KBM-7 (cell line): ENCODE measurements at regions of chr22 and their contacts with region 1.

Region 1: DNA sequence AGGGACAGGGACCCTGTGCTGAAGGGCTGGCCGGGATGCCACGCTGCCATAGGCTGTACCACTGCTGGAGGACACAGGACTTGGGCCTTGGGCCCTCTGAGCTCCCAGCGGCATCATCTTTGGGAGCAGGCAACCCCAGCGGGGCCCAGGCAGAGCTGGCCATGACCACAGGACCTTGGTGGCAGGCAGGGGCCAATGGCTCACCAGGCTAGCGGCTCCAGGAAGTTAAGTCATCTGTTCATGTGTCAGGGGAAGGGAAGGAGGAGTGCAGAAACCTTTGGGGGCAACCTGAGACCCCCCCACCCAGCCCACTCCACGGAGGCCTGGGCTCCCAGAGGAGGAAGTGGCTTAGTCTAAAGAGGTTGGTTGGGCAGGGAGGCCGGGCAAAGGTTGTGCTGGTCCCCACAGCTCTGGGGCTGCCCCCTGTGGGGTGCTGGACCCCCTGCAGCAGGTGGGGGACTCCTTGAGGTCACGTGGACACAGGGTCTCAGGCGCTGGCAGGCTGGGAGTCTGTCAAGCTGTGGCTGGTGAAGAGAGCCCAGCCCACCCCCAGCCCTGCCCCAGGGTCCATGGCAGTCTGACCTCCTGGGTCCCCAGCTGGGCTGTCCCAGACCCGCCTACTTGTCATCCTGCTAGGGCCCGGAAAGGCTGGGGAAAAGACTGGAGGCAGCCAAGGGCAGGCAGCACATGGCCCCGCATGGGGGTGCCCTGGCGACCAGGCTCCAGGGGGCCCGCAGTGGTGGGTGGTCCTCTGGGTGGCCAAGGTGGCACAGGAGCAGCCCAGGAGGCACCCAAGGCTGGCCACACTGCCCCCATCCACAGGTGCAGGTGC is 184.3 kb downstream of the IGLL1 start:
- DNase-seq: no peak

Region 2: DNA sequence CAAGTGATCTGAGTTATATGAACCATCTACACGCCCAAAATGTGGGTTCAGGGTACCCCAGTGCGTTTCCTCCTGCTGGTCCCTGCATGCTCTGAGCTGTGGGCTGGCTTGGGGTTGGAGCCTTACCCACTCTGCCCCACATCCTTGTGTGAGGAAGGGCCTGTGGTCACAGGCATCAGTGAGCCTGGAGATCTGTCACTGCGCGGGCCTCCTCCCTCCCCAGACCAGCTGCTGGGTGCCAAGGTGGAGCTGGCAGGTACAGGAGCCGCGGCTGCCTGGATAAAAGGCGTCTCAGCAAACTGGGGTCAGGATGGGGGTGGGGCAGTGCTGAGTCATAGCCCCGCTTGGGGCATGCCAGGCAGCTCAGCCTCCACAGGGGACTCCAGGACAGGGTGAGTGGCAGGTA is 307.5 kb before region 1 on chr22:
- in situ Hi-C with region 1: no loop called
- DNase-seq: no peak

Region 3: DNA sequence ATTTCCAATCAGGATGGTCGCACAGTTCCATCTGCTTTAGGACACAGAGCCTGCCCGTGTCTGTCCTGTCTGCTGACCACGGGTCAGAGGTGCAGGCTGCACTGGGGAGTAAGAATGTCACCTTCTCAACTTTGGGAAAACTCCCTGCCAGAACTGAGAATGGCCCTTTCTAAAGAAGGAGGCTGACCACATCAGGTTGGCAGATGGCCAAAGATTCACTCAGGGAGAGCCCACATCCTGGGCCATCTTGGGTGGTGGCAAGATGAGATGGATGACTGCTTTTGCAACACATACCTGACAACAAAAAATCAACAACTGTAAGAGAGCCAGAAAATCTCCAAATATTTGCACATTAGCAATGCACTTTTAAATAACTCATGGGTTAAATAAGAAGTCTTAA is 82.5 kb after region 1 on chr22:
- in situ Hi-C with region 1: no loop called
- DNase-seq: no peak

Region 4: GRCh38 chr22:23591201-23591791 is 195.6 kb after region 1 on chr22:
- in situ Hi-C with region 1: loop called (anchors 10 kb)
- DNase-seq: peak; percentile 79